ENCODE measurements at regions of chr1 and their contacts with region 1.

Region 1: DNA sequence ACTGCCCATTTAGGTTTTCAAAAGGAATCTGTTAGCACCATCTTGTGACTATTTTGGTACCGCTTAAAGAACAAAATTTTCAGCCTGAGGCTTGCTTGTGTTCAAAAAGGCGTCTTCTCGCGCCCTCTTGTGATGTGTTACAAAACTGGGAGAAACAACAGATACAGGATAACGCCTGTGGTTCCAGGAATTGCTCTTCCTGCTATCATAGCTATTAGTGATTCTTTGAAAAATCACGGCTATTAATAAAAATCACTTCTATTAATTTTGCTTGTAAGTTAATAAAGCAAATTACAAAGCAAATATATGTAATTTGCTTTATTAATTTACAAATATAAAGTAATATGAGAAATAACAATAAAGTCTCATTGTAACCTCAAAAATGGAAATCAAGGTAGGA is 82.2 kb upstream of the ABCD3 start:
- DNase-seq: peak; percentile 70
- H3K4me3 Mint-ChIP-seq: no peak overlapping the region
- H3K27ac Mint-ChIP-seq: no peak overlapping the region
- H3K4me1 Mint-ChIP-seq: peaks cover 25% of the 10 kb centered on the region
- H3K27me3 Mint-ChIP-seq: no peaks in the 10 kb centered on the region
- CTCF ChIP-seq: peak; percentile 68

Region 2: DNA sequence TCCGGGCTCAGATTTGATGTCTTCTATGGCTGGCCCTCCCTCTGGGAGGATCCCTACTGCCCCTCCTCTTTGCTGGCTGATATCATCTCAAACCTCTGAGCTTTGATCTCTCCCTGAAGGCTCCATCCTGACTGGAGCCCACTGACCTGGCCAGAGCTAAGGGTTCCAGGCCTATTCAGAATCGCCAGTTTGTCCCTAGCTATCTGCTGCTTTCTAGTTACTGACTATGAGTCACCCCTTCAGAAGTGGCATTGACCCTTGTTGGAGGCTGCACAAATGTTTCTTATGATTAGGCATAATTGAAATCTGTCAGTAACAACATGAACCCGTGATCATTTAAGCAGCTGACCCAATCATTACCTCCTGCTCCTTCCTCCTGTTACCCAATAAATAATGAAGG is 302.1 kb before region 1 on chr1:
- CTCF ChIA-PET with region 1: interaction called, 34 read pairs
- intact Hi-C with region 1: no loop called
- DNase-seq: no peak
- H3K4me3 Mint-ChIP-seq: no peak overlapping the region
- H3K27ac Mint-ChIP-seq: no peak overlapping the region
- H3K4me1 Mint-ChIP-seq: peaks cover 8% of the 10 kb centered on the region
- H3K27me3 Mint-ChIP-seq: no peaks in the 10 kb centered on the region
- CTCF ChIP-seq: no peak

Region 3: DNA sequence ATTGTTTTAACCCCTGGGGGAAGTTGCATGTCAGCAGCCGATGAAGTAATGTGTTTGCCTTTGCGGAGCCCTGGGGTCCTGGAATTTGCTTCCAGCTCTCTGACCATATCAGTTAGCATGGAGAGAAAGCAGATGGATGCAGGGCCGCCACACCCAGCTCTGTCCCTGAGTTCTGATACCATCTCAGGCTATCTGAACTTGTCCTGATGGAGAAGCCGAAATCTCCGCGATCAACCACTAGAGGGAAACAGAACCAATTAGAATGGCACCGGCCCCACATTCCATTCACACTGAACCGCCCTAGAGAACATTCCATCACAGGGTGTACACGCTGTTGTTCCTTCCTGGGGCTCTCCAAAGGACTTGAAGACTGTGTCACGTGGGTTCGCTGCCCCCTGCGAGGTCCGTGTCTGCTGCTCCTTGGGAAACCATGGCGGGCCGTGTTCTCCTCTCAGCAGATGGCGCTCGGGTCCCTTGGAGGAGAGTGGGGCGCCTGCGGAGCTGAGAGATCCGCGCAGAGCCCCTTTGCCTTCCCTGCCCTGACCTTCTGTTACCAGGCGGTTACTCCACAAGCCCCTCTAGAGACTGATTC is 290.4 kb before region 1 on chr1:
- CTCF ChIA-PET with region 1: interaction called, 36 read pairs
- intact Hi-C with region 1: loop called (anchors 1 kb)
- DNase-seq: peak; percentile 89
- H3K4me3 Mint-ChIP-seq: peak overlapping the region; percentile 47
- H3K27ac Mint-ChIP-seq: peak overlapping the region; percentile 83
- H3K4me1 Mint-ChIP-seq: peaks cover 15% of the 10 kb centered on the region
- H3K27me3 Mint-ChIP-seq: no peaks in the 10 kb centered on the region
- CTCF ChIP-seq: no peak

Region 4: DNA sequence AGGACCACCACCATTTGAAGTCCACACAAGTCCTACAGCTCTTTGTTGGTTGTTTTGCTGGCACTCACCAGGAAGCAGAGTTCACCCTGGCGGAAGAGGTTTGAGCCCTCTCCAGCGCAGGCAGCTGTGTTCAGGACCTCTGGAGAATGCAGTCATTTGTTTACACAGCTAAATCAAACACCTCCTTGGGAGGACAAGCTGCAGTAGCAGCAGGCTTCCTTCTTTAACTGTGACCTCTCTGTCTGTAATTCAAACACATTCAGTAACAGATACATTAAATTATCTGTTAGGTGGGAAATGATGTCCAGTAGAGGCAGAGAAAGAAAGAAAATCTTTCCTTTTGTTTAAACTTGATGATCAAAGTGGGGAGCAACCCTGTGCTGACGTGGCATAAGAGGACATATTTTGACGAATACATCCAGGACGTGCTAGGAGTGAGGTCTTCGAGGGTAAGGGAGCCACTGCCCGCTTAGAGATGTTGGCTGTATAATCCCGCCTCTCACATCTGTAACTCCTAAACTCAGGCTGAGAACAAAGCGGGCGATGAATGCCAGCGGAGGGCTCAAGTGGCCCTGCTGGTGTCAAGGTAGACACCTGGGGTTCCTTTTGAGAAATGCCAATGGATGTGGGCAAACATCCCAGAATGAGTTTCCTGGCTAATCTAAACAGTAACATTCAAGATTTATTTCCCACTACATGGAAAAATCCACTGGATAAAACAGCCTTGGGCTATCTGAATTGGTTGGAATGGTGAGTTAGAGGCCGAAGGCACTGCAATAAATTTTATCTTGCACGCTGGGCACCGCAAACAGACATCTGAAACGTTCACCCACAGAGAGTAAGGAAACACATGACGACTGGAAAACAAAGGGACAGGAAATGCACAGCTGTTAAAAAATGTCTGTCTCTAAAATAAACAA is 266.7 kb before region 1 on chr1:
- CTCF ChIA-PET with region 1: interaction called, 107 read pairs
- intact Hi-C with region 1: loop called (anchors 2 kb)
- DNase-seq: peak; percentile 71
- H3K4me3 Mint-ChIP-seq: peak overlapping the region; percentile 11
- H3K27ac Mint-ChIP-seq: peak overlapping the region; percentile 90
- H3K4me1 Mint-ChIP-seq: peaks cover 37% of the 10 kb centered on the region
- H3K27me3 Mint-ChIP-seq: no peaks in the 10 kb centered on the region
- CTCF ChIP-seq: no peak

Region 5: GRCh38 chr1:94417978-94418663 is 82.2 kb after region 1 on chr1 and contains the start of gene ABCD3:
- CTCF ChIA-PET with region 1: interaction called, 4 read pairs
- intact Hi-C with region 1: loop called (anchors 5 kb)
- DNase-seq: peak; percentile 97
- H3K4me3 Mint-ChIP-seq: no peak within 1 kb of the TSS
- H3K27ac Mint-ChIP-seq: no peak within 1 kb of the TSS
- H3K4me1 Mint-ChIP-seq: peaks cover 44% of the 10 kb centered on the region
- H3K27me3 Mint-ChIP-seq: no peaks in the 10 kb centered on the region
- CTCF ChIP-seq: no peak
- total RNA-seq, gene ABCD3: 51.0 and 59.3 TPM in 2 replicates

Measured in Calu3 (cell line).